ENCODE measurements at regions of chr9 and their contacts with region 1.

Region 1: GRCh38 chr9:130770679-130771442 is 64.2 kb upstream of the ABL1 start:
- DNase-seq: peak in 1 of 2 experiments; percentile 63
- H3K4me3 ChIP-seq: no peak overlapping the region
- H3K4me3 Mint-ChIP-seq: no peak overlapping the region
- H3K27ac Mint-ChIP-seq: no peak overlapping the region
- H3K4me1 ChIP-seq: peaks cover 11% of the 10 kb centered on the region
- H3K4me1 Mint-ChIP-seq: peaks cover 12% of the 10 kb centered on the region
- H3K27me3 ChIP-seq: no peaks in the 10 kb centered on the region
- H3K27me3 Mint-ChIP-seq: no peaks in the 10 kb centered on the region
- CTCF ChIP-seq: peak; percentile 51 to 57

Region 2: DNA sequence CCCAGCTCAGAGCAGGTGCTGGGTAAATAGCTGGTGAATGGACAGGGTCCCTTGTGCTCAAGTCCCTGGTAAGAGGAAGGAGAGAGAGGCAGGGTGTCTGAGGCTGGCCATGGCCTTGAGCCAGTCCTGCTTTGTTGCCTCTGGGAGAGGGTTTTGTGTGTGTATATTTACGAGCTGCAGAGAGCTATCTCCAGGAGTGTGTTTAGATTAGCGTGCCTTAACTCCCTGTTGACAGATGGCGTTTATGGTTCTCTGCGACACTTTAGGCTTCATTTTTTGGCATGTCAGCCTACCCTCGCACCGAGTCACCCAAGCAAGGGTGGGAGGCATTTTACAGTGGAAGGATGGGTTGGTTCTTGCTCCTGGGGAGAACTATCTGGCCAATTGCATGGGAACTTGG is 483.1 kb before region 1 on chr9:
- CTCF ChIA-PET with region 1: no interaction called
- POLR2A ChIA-PET with region 1: no interaction called
- intact Hi-C with region 1: no loop called
- DNase-seq: no peak
- H3K4me3 ChIP-seq: no peak overlapping the region
- H3K4me3 Mint-ChIP-seq: no peak overlapping the region
- H3K27ac Mint-ChIP-seq: no peak overlapping the region
- H3K4me1 ChIP-seq: no peaks in the 10 kb centered on the region
- H3K4me1 Mint-ChIP-seq: no peaks in the 10 kb centered on the region
- H3K27me3 ChIP-seq: peaks cover 2% of the 10 kb centered on the region; the same call in 1 of the 2 replicates
- H3K27me3 Mint-ChIP-seq: peaks cover 37% of the 10 kb centered on the region
- CTCF ChIP-seq: no peak

Region 3: GRCh38 chr9:130498298-130498917 is 272.5 kb before region 1 on chr9:
- CTCF ChIA-PET with region 1: no interaction called
- POLR2A ChIA-PET with region 1: no interaction called
- intact Hi-C with region 1: no loop called
- DNase-seq: no peak
- H3K4me3 ChIP-seq: no peak overlapping the region
- H3K4me3 Mint-ChIP-seq: no peak overlapping the region
- H3K27ac Mint-ChIP-seq: no peak overlapping the region
- H3K4me1 ChIP-seq: peaks cover 19% of the 10 kb centered on the region
- H3K4me1 Mint-ChIP-seq: no peaks in the 10 kb centered on the region
- H3K27me3 ChIP-seq: no peaks in the 10 kb centered on the region
- H3K27me3 Mint-ChIP-seq: no peaks in the 10 kb centered on the region
- CTCF ChIP-seq: no peak

Region 4: DNA sequence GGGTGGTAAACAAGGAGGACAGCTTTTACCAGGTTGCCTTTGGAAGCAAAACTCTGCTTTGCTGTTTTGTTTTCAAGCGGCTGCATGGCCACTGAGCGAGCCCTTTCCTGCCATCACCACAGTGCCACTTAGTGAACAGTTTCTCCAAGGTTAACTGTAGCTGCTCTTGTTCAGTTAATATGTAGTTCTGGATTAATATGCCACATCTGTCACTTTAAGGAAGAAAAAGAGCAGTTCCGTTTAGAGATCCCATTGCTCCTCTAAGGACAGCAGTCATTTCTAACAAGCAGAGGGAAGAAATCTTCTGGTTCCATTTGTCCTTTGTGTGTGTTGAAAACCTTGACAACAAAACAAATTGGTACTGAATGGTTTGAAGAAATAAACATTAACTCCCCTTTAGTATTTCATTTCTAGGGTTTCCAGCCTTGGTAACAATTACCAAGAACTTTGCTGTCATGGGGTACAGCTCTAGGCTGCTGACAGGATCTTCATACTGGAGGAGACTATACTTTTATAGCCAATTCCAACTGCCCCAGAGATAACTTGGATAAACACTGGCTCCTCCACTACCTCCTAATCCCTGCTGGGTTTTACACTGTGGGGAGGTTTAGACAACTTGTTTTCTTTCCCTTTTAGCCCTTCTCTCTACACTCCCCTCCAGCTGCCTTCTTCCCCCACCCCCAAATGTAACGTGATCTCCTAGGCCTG is 53.9 kb after region 1 on chr9:
- CTCF ChIA-PET with region 1: no interaction called
- POLR2A ChIA-PET with region 1: no interaction called
- intact Hi-C with region 1: loop called (anchors 1 kb)
- DNase-seq: peak; percentile 80 to 85
- H3K4me3 ChIP-seq: no peak overlapping the region
- H3K4me3 Mint-ChIP-seq: peak overlapping the region; percentile 43
- H3K27ac Mint-ChIP-seq: peak overlapping the region; percentile 43
- H3K4me1 ChIP-seq: peaks cover 24% of the 10 kb centered on the region
- H3K4me1 Mint-ChIP-seq: peaks cover 20% of the 10 kb centered on the region
- H3K27me3 ChIP-seq: no peaks in the 10 kb centered on the region
- H3K27me3 Mint-ChIP-seq: no peaks in the 10 kb centered on the region
- CTCF ChIP-seq: no peak

Measured in Caco-2 (cell line).